Uterus (tissue), 4 donors: ENCODE measurements at regions of chr4 and their contacts with region 1.

Region 1: DNA sequence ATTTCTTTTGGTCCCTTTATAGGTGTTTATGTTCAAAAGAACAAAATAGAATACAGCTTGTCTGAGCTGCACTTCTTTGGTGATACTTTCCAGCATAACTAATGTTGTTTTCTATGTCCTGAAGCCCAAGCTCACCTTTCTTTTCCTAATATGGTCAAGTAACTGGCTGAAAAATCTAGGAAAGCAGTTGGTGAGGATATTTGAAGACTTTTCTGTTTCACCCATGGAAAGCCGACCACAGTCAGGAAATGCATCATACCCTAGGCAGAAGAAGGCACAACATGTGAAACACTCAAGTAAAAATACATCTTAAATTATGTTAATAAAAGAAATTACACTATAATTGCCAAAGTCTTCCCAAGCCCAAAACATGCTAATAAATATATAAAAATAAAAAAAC is 337.0 kb downstream of the PDGFC start:
- DNase-seq: no peak
- H3K4me3 ChIP-seq: no peak overlapping the region
- H3K27ac ChIP-seq: peak overlapping the region in 1 of 2 donors; percentile 42
- H3K4me1 ChIP-seq: no peaks in the 10 kb centered on the region
- H3K27me3 ChIP-seq: no peaks in the 10 kb centered on the region
- CTCF ChIP-seq: no peak
- POLR2A ChIP-seq: no peak

Region 2: GRCh38 chr4:156029691-156030090 is 604.9 kb before region 1 on chr4:
- intact Hi-C with region 1: loop called (anchors 5 kb)
- DNase-seq: no peak
- H3K4me3 ChIP-seq: no peak overlapping the region
- H3K27ac ChIP-seq: no peak overlapping the region
- H3K4me1 ChIP-seq: no peaks in the 10 kb centered on the region
- H3K27me3 ChIP-seq: no peaks in the 10 kb centered on the region
- CTCF ChIP-seq: no peak
- POLR2A ChIP-seq: no peak

Region 3: DNA sequence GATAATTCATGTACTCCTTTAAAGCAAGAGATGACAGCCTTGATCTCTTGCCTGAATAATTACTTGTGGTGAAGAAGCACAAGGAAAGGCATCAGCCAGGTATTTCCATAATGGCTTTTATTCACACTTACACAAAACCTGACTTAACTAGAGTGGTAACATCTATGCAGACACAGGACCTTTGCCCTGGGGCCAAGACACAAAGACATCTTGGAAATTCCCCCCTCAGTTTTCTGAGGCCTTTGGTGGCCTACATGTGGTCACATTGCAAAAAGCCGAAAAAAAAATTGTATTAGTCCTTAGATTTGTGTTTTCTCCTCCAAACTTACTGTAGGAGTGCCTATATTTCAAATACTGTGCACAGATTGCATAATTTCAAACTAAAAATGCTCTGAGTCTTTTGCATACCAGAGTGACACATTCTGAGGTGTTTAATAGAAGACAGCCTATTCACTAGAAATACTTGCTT is 164.5 kb after region 1 on chr4:
- intact Hi-C with region 1: no loop called
- DNase-seq: no peak
- H3K4me3 ChIP-seq: no peak overlapping the region
- H3K27ac ChIP-seq: no peak overlapping the region
- H3K4me1 ChIP-seq: no peaks in the 10 kb centered on the region
- H3K27me3 ChIP-seq: no peaks in the 10 kb centered on the region
- CTCF ChIP-seq: no peak
- POLR2A ChIP-seq: no peak